ENCODE measurements at regions of chr17 and their contacts with region 1.

Region 1: GRCh38 chr17:38702166-38702899 is 2.7 kb upstream of the MLLT6 start:
- DNase-seq: peak; percentile 85
- ATAC-seq: peak; percentile 40
- H3K4me3 Mint-ChIP-seq: peak overlapping the region; percentile 96
- H3K27ac Mint-ChIP-seq: peak overlapping the region; percentile 97
- H3K4me1 Mint-ChIP-seq: peaks cover 28% of the 10 kb centered on the region
- H3K27me3 Mint-ChIP-seq: no peaks in the 10 kb centered on the region

Region 2: DNA sequence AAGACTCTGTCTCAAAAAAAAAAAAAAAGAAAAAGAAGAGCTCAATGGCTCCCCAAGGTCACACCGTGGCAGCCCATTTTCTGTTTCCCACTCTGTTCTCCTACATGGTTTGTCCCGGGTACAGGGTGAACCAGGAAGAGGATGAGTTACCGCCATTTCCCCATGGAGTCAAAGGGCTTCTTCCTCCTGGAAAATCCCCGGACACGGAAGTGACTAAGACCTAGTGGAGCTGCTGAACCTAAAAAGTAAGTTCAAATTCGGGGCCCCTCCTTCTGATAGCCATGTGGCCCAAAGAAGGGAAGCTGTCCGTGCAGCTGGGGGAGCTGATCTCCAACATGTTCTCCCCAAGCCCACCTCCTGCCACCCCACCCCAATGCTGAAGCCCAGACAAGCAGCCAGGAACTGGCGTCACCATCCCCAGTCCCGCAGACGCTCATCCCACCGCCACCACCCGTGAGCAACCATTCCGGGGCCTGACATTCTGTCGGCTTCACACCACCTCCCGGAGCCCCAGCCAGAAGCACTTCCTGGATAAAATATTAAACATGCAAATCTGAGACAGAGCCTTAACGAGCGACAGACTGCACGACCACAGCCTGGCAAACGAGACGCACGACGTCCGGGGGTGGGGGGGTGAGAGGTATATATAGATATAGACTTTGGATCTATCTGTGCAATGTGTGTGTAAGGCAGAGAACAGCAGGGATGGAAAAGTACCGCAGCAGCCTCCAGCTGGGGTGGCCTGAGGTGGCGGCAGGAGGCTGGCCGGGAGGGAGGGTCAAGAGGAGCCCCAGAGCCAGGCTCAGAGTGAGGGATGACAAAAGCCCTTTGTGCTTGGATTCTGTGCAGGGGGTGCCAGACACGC is 45.1 kb before region 1 on chr17:
- POLR2A ChIA-PET with region 1: no interaction called
- DNase-seq: no peak
- ATAC-seq: no peak
- H3K4me3 Mint-ChIP-seq: no peak overlapping the region
- H3K27ac Mint-ChIP-seq: peak overlapping the region; percentile 69
- H3K4me1 Mint-ChIP-seq: peaks cover 23% of the 10 kb centered on the region
- H3K27me3 Mint-ChIP-seq: peaks cover 14% of the 10 kb centered on the region

Region 3: DNA sequence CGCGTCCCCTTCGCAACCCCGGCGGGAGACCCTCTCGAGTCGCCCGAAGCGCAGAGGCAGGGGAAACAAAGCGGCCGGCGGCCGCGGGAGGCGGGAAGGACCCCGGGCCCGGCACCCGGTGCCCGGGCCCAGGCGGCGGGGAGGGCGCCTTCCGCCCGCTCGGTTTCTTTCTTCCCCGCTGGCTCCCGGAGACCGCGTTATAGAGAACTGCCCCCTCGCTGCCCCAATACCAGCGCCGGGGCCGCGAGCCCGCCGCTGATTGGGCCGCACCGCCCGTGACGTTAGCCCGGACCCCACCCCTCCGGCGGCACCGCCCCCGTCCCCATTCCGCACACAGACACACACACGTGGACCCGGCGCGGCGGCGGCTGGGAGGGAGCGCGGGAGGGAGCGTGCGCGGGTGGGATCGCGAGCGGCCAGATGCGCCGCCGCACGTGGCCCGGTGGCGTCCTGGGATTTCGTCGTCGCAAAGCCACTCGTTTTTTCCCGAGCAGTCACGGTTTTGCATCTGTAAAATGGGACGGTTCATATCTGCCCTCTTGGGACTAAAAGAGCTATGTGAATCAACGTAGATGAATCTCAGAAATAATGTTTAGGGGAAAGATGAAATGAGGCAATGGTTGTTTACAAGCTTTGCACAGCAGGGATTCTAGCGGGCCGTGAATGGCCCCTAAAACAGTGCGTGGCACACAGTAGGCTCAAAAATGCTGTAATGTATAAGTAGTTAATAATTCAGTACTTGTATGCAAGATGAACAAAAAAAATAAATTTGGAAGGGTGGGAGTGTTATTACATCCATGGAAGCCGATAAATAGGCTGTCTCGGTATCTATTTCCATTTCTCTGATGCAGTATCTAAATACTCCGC is 27.4 kb before region 1 on chr17 and contains the start of gene EPOP:
- POLR2A ChIA-PET with region 1: interaction called, 44 read pairs
- DNase-seq: peak; percentile 92
- ATAC-seq: peak; percentile 88
- H3K4me3 Mint-ChIP-seq: peak within 1 kb of the TSS; percentile 68
- H3K27ac Mint-ChIP-seq: peak within 1 kb of the TSS; percentile 33
- H3K4me1 Mint-ChIP-seq: peaks cover 31% of the 10 kb centered on the region
- H3K27me3 Mint-ChIP-seq: peaks cover 24% of the 10 kb centered on the region
- total RNA-seq, gene EPOP: 7.2 TPM

Region 4: DNA sequence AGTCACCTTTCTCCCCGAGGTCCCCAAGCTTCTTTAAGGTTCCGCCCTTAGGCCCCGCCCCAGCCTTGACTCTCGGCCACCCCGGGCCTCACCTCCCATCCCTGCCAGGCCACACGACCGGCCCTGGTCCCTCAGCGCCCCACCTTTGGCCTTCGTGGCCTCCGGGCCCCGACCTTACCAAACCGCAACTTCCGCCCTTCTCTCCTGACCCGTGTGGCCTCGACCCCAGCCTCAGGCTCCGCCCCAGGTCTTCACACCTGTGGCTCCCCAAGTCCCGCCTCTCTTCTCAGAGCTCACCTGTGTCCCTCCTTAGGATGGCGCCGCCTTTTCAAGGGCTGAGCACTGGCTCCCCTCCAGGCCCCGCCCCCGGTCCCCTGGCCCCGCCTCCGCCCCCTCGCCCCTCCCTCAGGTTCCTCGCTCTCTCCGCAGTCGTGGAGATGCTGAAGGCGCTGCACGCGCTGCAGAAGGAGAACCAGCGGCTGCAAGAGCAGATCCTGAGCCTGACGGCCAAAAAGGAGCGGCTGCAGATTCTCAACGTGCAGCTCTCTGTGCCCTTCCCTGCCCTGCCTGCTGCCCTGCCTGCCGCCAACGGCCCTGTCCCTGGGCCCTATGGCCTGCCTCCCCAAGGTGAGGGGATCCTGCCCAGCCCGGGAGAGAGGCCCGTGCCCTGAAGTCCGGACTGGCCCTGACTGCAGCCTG is 17.8 kb after region 1 on chr17:
- POLR2A ChIA-PET with region 1: interaction called, 26 read pairs
- DNase-seq: no peak
- ATAC-seq: no peak
- H3K4me3 Mint-ChIP-seq: no peak overlapping the region
- H3K27ac Mint-ChIP-seq: peak overlapping the region; percentile 51
- H3K4me1 Mint-ChIP-seq: peaks cover 10% of the 10 kb centered on the region
- H3K27me3 Mint-ChIP-seq: no peaks in the 10 kb centered on the region

Region 5: DNA sequence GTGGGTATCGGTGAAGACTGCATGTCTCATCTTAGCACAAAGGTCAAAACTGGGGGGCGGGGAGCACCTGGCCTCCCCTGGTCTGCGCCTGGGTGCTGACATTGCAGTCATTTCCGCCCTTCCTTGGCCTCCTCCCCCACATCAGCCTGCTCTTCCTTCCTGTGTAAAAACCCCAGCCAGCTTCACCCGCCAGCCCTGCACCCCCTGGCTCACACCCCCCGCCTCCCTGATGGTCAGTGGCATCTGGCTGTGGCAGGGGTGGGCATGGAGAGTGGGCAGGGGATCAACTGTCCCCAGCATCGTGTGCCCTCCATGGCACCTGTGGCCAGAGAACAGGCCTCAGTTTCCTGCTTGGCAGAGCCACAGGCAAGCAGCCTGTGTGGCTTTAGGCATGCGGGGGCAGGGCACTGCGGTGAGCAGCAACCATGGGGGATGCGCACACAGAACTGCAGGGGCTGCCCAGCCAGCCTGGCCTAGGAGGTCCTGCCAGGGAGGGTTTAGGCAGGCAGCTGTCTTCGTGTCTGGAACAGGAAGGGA is 196.5 kb after region 1 on chr17:
- POLR2A ChIA-PET with region 1: no interaction called
- DNase-seq: peak; percentile 81
- ATAC-seq: peak; percentile 71
- H3K4me3 Mint-ChIP-seq: peak overlapping the region; percentile 68
- H3K27ac Mint-ChIP-seq: peak overlapping the region; percentile 91
- H3K4me1 Mint-ChIP-seq: peaks cover 63% of the 10 kb centered on the region
- H3K27me3 Mint-ChIP-seq: no peaks in the 10 kb centered on the region

Measured in activated naive CD8-positive, alpha-beta T cell treated with anti-CD3 and anti-CD28 coated beads, Interleukin-2, amount 10 ng/mL, durations not matched to agents 7 days and 5 days (primary cell).